GM10248 (cell line): ENCODE measurements at regions of chr9 and their contacts with region 1.

Region 1: GRCh38 chr9:113657703-113658544 is 194.4 kb downstream of the RGS3 start:
- DNase-seq: peak; percentile 88
- CTCF ChIP-seq: peak; percentile 91

Region 2: DNA sequence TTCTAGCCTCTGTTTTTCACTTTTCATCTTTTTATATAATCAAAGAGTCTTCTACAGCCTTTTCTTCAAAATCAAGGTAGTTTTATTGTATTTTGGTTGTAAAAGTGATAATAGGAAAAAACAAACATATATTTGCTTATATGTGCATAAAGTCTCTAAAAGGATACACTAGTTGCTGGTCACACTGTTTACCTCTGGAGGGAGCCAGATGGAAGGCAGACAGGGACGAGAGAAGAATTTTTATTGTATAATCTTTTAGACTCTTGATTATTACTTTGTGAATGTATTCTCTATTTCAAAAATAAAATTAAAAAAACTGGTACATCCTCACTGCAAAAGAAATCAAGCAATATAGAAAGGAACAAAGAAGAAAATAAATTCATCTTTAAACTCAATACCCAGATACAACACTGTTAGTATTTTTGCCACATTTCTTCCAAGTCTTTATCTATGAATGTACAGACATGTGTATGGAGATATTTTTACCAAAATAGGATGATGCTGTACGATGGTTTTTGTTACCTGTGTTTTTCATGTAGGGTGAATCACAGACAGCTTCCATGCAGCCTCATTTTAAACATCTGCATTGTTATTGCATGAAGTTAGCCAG is 348.6 kb before region 1 on chr9:
- CTCF ChIA-PET with region 1: interaction called, 11 read pairs
- POLR2A ChIA-PET with region 1: no interaction called
- DNase-seq: peak; percentile 62
- CTCF ChIP-seq: peak; percentile 72

Region 3: GRCh38 chr9:113446323-113446740 is 211.6 kb before region 1 on chr9:
- CTCF ChIA-PET with region 1: interaction called, 171 read pairs
- POLR2A ChIA-PET with region 1: no interaction called
- DNase-seq: peak; percentile 74
- CTCF ChIP-seq: peak; percentile 53

Region 4: GRCh38 chr9:113578882-113579282 is 79.0 kb before region 1 on chr9:
- CTCF ChIA-PET with region 1: interaction called, 422 read pairs
- POLR2A ChIA-PET with region 1: no interaction called
- DNase-seq: peak; percentile 87
- CTCF ChIP-seq: no peak

Region 5: DNA sequence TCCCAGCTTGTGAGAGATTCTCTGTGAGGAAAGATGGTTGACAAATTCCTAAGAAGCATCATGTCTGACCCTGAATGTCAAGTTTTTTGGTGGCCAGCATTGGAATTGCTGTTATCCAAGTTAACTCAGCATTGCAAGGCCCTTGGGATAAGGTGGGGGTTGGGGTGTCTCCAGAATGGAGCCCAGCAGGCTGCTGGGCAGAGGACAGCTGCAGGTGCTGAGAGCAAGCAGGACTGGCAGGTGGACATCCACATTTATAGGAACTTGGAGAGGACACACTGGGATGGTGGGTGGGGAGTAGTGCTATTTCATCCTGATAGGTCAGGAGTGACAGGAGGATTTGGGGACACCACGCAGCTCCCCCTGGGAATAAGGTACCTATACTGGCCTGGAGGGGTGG is 46.5 kb before region 1 on chr9:
- CTCF ChIA-PET with region 1: interaction called, 11 read pairs
- POLR2A ChIA-PET with region 1: no interaction called
- DNase-seq: no peak
- CTCF ChIP-seq: no peak

Region 6: DNA sequence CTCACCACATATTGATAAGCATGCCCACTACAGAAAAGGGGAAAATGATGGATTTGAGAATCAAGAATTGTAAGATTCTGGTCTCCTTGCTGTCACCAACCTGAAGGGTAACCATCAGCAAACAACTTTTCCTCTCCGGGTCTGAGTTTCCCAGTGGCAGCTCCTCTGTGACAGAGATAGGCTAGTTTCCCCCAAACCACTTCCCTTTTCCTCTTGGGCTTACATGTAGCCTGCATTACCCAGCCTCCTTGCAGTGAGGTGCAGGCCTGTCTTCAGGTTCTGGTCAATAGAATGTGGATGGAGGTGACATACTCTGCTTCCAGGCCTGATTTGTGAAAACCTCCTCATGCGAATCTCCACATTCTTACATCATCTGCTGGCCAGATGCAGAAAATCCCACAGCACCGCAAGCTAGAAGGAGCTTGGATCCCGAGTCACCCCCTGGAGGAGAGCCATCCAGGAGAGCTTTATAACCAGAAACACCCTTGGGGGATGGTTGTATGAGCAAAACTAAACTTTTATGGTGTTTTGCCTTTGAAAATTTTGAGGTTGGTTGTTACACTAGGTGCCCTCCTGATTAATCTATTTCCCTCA is 11.7 kb after region 1 on chr9:
- CTCF ChIA-PET with region 1: interaction called, 64 read pairs
- POLR2A ChIA-PET with region 1: no interaction called
- DNase-seq: no peak
- CTCF ChIP-seq: no peak